ENCODE measurements at regions of chr12 and their contacts with region 1.

Region 1: GRCh38 chr12:93378373-93379325 is 924 bp downstream of the NUDT4 start:
- DNase-seq: no peak
- ATAC-seq: peak; percentile 8; the same call in 2 of the 3 replicates
- H3K4me3 ChIP-seq: peak overlapping the region; percentile 78 to 88 (median 80)
- H3K27ac ChIP-seq: peak overlapping the region; percentile 64
- H3K4me1 ChIP-seq: peaks cover 56% of the 10 kb centered on the region
- H3K27me3 ChIP-seq: no peaks in the 10 kb centered on the region; a peak in 1 of 5 replicates
- CTCF ChIP-seq: no peak
- EP300 ChIP-seq: no peak
- POLR2A ChIP-seq: 0 out of 4 replicates have a peak, but pooled peaks of 1 of the 2 experiments have one; percentile 29
- RAD21 ChIP-seq: no peak

Region 2: GRCh38 chr12:93008044-93008778 is 370.4 kb before region 1 on chr12:
- CTCF ChIA-PET with region 1: no interaction called
- POLR2A ChIA-PET with region 1: no interaction called
- in situ Hi-C with region 1: no loop called
- intact Hi-C with region 1: loop called (anchors 5 kb)
- DNase-seq: peak; percentile 62
- ATAC-seq: no peak
- H3K4me3 ChIP-seq: peak overlapping the region; percentile 25 to 68 (median 50); a peak in 5 of 6 replicates
- H3K27ac ChIP-seq: peak overlapping the region; percentile 89
- H3K4me1 ChIP-seq: peaks cover 79% of the 10 kb centered on the region
- H3K27me3 ChIP-seq: no peaks in the 10 kb centered on the region
- CTCF ChIP-seq: no peak
- EP300 ChIP-seq: no peak; a peak in 1 of 4 replicates
- POLR2A ChIP-seq: no peak
- RAD21 ChIP-seq: no peak

Region 3: GRCh38 chr12:93137656-93138612 is 240.7 kb before region 1 on chr12:
- CTCF ChIA-PET with region 1: no interaction called
- POLR2A ChIA-PET with region 1: interaction called, 3 read pairs
- in situ Hi-C with region 1: loop called (anchors 25 kb)
- intact Hi-C with region 1: no loop called
- DNase-seq: no peak
- ATAC-seq: no peak
- H3K4me3 ChIP-seq: no peak overlapping the region
- H3K27ac ChIP-seq: no peak overlapping the region
- H3K4me1 ChIP-seq: peaks cover 90% of the 10 kb centered on the region
- H3K27me3 ChIP-seq: no peaks in the 10 kb centered on the region
- CTCF ChIP-seq: no peak
- EP300 ChIP-seq: no peak
- POLR2A ChIP-seq: no peak
- RAD21 ChIP-seq: no peak

Region 4: GRCh38 chr12:93317227-93317626 is 61.4 kb before region 1 on chr12:
- CTCF ChIA-PET with region 1: no interaction called
- POLR2A ChIA-PET with region 1: interaction called, 3 read pairs
- in situ Hi-C with region 1: no loop called
- intact Hi-C with region 1: loop called (anchors 2 kb)
- DNase-seq: peak; percentile 84
- ATAC-seq: peak; percentile 37
- H3K4me3 ChIP-seq: no peak overlapping the region; a peak in 1 of 6 replicates
- H3K27ac ChIP-seq: peak overlapping the region; percentile 69
- H3K4me1 ChIP-seq: peaks cover 81% of the 10 kb centered on the region
- H3K27me3 ChIP-seq: no peaks in the 10 kb centered on the region
- CTCF ChIP-seq: no peak
- EP300 ChIP-seq: peak in 1 of 2 experiments; percentile 56; a peak in 2 of 4 replicates
- POLR2A ChIP-seq: no peak
- RAD21 ChIP-seq: no peak

Measured in HepG2 (cell line).